ENCODE measurements at regions of chr19 and their contacts with region 1.

Region 1: DNA sequence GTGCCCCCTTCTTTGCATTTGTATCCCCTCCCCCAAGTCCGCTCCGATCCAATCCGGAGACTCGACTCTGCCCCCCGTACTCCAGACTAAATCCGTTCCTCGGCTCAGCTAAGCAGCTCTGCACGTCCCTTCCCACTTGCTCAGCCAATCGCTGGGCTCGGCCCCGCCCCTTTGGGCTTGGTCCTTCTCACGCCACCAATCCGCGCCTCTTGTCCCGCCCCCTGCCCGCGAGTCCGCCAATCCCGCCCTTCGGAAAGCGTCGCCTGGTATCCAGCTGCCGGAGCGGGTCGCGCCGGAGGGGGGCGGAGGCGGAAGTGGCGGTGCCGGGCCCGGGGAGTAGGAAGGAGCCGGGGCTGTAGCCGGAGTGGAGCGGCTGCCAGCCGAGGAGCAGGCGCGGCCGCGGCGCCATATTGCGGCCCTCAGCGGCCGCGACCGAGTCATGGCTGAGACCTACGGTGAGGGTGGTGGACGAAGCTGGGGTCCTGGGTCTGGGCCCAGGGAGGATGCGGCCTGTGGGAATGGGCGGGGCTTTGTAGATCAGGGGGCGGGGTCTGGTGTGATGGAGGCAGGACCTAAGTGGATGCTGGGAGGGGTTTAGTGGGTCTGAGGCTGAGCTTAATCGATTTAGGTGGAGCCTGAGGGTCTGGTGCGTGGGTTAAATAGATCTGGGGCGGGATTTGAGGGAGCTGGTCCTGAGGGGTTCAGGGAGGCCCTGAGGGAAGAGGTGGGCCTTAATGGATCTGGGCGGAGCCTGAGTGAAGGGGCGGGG is at the start of gene RAB4B:
- DNase-seq: peak; percentile 100
- ATAC-seq: peak; percentile 87
- H3K4me3 Mint-ChIP-seq: peak within 1 kb of the TSS; percentile 91
- H3K27ac Mint-ChIP-seq: peak within 1 kb of the TSS; percentile 99
- H3K4me1 Mint-ChIP-seq: peaks cover 41% of the 10 kb centered on the region
- H3K27me3 Mint-ChIP-seq: no peaks in the 10 kb centered on the region
- total RNA-seq, gene RAB4B: 50.2 to 53.1 TPM

Region 2: DNA sequence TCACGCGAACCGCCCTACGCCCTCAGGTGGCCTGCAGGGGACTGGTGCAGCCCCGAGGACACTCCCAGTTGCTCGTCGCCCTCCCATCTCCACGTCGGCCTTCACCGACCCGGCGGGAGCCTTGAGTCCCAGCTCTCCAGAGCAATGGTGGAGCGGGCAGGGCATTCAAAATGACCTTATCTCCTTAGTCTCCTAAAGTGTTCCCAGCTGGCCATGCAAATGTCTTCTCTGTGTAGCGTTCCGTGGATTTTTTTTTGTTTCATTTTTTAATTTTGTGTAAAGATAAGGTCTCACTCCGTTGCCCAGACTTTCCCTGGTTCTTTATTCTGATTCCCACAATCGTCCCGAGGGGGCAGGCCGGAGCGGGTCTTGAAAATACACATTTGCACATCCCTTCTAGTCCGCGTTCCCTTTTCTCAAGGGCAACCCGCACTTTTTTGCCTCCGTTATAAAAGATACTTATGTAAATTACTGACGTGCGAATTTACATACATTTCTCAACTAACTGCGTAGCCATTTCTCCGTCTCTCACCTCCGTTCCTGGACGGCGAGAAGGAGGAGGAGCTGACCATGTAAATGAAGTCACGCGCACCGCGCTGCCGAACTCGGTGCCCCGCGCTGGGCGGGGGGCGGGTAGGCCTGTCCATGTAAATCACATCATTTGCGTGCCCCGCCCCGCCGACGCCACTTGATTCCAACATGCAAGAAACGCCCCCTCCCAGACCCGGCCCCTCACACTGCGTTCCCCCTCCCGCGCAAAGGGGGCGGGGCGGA is 20.3 kb after region 1 on chr19:
- CTCF ChIA-PET with region 1: interaction called, 49 read pairs
- POLR2A ChIA-PET with region 1: interaction called, 38 read pairs
- DNase-seq: peak; percentile 100
- ATAC-seq: peak; percentile 86
- H3K4me3 Mint-ChIP-seq: peak overlapping the region; percentile 93
- H3K27ac Mint-ChIP-seq: peak overlapping the region; percentile 96
- H3K4me1 Mint-ChIP-seq: peaks cover 54% of the 10 kb centered on the region
- H3K27me3 Mint-ChIP-seq: no peaks in the 10 kb centered on the region

Region 3: GRCh38 chr19:40822161-40822560 is 44.0 kb after region 1 on chr19:
- CTCF ChIA-PET with region 1: interaction called, 15 read pairs
- POLR2A ChIA-PET with region 1: no interaction called
- DNase-seq: no peak
- ATAC-seq: no peak
- H3K4me3 Mint-ChIP-seq: no peak overlapping the region
- H3K27ac Mint-ChIP-seq: no peak overlapping the region
- H3K4me1 Mint-ChIP-seq: peaks cover 53% of the 10 kb centered on the region
- H3K27me3 Mint-ChIP-seq: no peaks in the 10 kb centered on the region

Region 4: GRCh38 chr19:40858109-40858508 is 80.0 kb after region 1 on chr19:
- CTCF ChIA-PET with region 1: no interaction called
- POLR2A ChIA-PET with region 1: no interaction called
- DNase-seq: no peak
- ATAC-seq: no peak
- H3K4me3 Mint-ChIP-seq: no peak overlapping the region
- H3K27ac Mint-ChIP-seq: no peak overlapping the region
- H3K4me1 Mint-ChIP-seq: no peaks in the 10 kb centered on the region
- H3K27me3 Mint-ChIP-seq: peaks cover 16% of the 10 kb centered on the region